T-cell (primary cell): ENCODE measurements at regions of chr9 and their contacts with region 1.

Region 1: DNA sequence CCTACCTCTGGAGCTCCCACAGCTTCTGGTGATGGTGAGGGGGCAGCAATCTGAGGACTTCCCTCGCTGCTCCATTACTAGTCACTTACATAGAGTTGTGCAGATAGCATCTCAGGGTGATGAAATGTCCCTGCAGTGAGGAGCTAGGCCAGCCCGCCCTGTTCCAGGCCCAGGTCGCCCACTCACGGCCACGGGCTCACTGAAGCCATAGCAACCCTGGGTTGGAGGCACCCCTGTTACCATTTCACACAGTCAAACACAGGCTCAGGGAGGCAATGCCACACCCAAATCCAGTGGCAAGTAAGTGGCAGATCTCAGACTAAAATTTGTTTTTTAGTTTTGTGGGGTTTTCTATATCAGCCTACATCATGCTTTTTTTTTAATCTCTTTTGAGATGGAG is 19.6 kb downstream of the SH2D3C start:
- DNase-seq: no peak
- ATAC-seq: no peak
- H3K4me3 ChIP-seq: no peak overlapping the region
- H3K4me3 Mint-ChIP-seq: no peak overlapping the region
- H3K27ac ChIP-seq: no peak overlapping the region
- H3K27ac Mint-ChIP-seq: peak overlapping the region; percentile 49 to 76
- H3K4me1 ChIP-seq: peaks cover 0 to 14% of the 10 kb centered on the region in 2 experiments
- H3K4me1 Mint-ChIP-seq: peaks cover 21 to 26% (median 21%) of the 10 kb centered on the region in 3 donors
- H3K27me3 ChIP-seq: no peaks in the 10 kb centered on the region
- H3K27me3 Mint-ChIP-seq: no peaks in the 10 kb centered on the region

Region 2: GRCh38 chr9:127525401-127526187 is 233.2 kb before region 1 on chr9:
- CTCF ChIA-PET with region 1: no interaction called
- POLR2A ChIA-PET with region 1: interaction called in 1 of 2 experiments, 10 read pairs
- DNase-seq: peak in 5 of 35 experiments; percentile 4 to 40 (median 14)
- ATAC-seq: peak in 1 of 4 experiments; percentile 50
- H3K4me3 ChIP-seq: no peak overlapping the region
- H3K4me3 Mint-ChIP-seq: no peak overlapping the region
- H3K27ac ChIP-seq: no peak overlapping the region
- H3K27ac Mint-ChIP-seq: no peak overlapping the region
- H3K4me1 ChIP-seq: no peaks in the 10 kb centered on the region
- H3K4me1 Mint-ChIP-seq: no peaks in the 10 kb centered on the region
- H3K27me3 ChIP-seq: no peaks in the 10 kb centered on the region
- H3K27me3 Mint-ChIP-seq: no peaks in the 10 kb centered on the region

Region 3: DNA sequence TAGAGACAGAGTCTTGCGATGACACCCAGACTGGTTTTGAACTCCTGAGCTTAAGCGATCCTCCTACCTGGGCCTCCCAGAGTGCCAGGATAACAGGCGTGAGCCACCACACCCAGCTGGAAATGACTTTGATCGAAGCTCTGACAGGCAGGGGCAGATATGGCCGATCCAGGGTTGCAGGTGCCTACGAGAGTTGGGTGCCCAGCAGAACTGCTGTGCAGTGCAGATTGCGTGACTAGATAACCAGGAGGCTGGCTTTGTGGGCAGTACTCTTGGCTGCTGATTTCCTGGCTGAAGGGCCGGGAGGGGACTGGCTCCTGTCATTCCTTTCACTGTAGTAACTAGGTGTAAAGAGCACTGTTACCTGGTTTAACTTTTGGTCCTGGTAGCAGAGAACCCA is 1040.1 kb after region 1 on chr9:
- CTCF ChIA-PET with region 1: no interaction called
- POLR2A ChIA-PET with region 1: no interaction called
- DNase-seq: no peak
- ATAC-seq: no peak
- H3K4me3 ChIP-seq: no peak overlapping the region
- H3K4me3 Mint-ChIP-seq: no peak overlapping the region
- H3K27ac ChIP-seq: no peak overlapping the region
- H3K27ac Mint-ChIP-seq: no peak overlapping the region
- H3K4me1 ChIP-seq: no peaks in the 10 kb centered on the region
- H3K4me1 Mint-ChIP-seq: peaks cover 0 to 2% (median under 1%) of the 10 kb centered on the region in 3 donors
- H3K27me3 ChIP-seq: no peaks in the 10 kb centered on the region
- H3K27me3 Mint-ChIP-seq: no peaks in the 10 kb centered on the region